ENCODE measurements at regions of chr10 and their contacts with region 1.

Region 1: GRCh38 chr10:113269333-113269732 is 283.5 kb upstream of the HABP2 start:
- DNase-seq: no peak
- ATAC-seq: peak; percentile 29; the same call in 1 of the 2 replicates
- H3K4me3 Mint-ChIP-seq: no peak overlapping the region
- H3K27ac Mint-ChIP-seq: no peak overlapping the region
- H3K4me1 Mint-ChIP-seq: peaks cover 19% of the 10 kb centered on the region
- H3K27me3 Mint-ChIP-seq: no peaks in the 10 kb centered on the region; the same call in 1 of the 2 replicates
- CTCF ChIP-seq: no peak

Region 2: GRCh38 chr10:113058523-113058961 is 210.8 kb before region 1 on chr10:
- CTCF ChIA-PET with region 1: no interaction called
- POLR2A ChIA-PET with region 1: no interaction called
- DNase-seq: no peak
- ATAC-seq: peak; percentile 7; the same call in 1 of the 2 replicates
- H3K4me3 Mint-ChIP-seq: no peak overlapping the region
- H3K27ac Mint-ChIP-seq: no peak overlapping the region
- H3K4me1 Mint-ChIP-seq: peaks cover 34% of the 10 kb centered on the region
- H3K27me3 Mint-ChIP-seq: no peaks in the 10 kb centered on the region
- CTCF ChIP-seq: no peak

Region 3: GRCh38 chr10:113121153-113121552 is 148.2 kb before region 1 on chr10:
- CTCF ChIA-PET with region 1: no interaction called
- POLR2A ChIA-PET with region 1: no interaction called
- DNase-seq: no peak
- ATAC-seq: peak; percentile 62
- H3K4me3 Mint-ChIP-seq: no peak overlapping the region; the same call in 1 of the 2 replicates
- H3K27ac Mint-ChIP-seq: peak overlapping the region; percentile 71
- H3K4me1 Mint-ChIP-seq: peaks cover 76% of the 10 kb centered on the region
- H3K27me3 Mint-ChIP-seq: no peaks in the 10 kb centered on the region
- CTCF ChIP-seq: no peak

Region 4: GRCh38 chr10:113245286-113245685 is 24.0 kb before region 1 on chr10:
- CTCF ChIA-PET with region 1: interaction called, 3 read pairs
- POLR2A ChIA-PET with region 1: interaction called, 10 read pairs
- DNase-seq: no peak
- ATAC-seq: no peak
- H3K4me3 Mint-ChIP-seq: no peak overlapping the region
- H3K27ac Mint-ChIP-seq: no peak overlapping the region
- H3K4me1 Mint-ChIP-seq: no peaks in the 10 kb centered on the region
- H3K27me3 Mint-ChIP-seq: peaks cover 3% of the 10 kb centered on the region; the same call in 1 of the 2 replicates
- CTCF ChIP-seq: no peak

Region 5: GRCh38 chr10:113399065-113399464 is 129.7 kb after region 1 on chr10:
- CTCF ChIA-PET with region 1: no interaction called
- POLR2A ChIA-PET with region 1: no interaction called
- DNase-seq: no peak
- ATAC-seq: no peak
- H3K4me3 Mint-ChIP-seq: no peak overlapping the region
- H3K27ac Mint-ChIP-seq: no peak overlapping the region
- H3K4me1 Mint-ChIP-seq: peaks cover 18% of the 10 kb centered on the region
- H3K27me3 Mint-ChIP-seq: no peaks in the 10 kb centered on the region
- CTCF ChIP-seq: no peak